Sigmoid colon (tissue), 7 donors: ENCODE measurements at regions of chr9 and their contacts with region 1.

Region 1: GRCh38 chr9:136118320-136119060 is at the start of gene TMEM250:
- DNase-seq: peak; percentile 98
- H3K4me3 ChIP-seq: peak within 1 kb of the TSS; percentile 54 to 98 (median 88)
- H3K27ac ChIP-seq: peak within 1 kb of the TSS; percentile 93 to 99 (median 98)
- H3K4me1 ChIP-seq: peaks cover 0 to 49% (median 36%) of the 10 kb centered on the region in 4 donors
- H3K27me3 ChIP-seq: no peaks in the 10 kb centered on the region
- CTCF ChIP-seq: peak in 1 of 4 experiments; percentile 12
- EP300 ChIP-seq: peak in 1 of 4 donors; percentile 56
- POLR2A ChIP-seq: no peak
- total RNA-seq, gene TMEM250: 23.7 to 35.6 (median 30.2) TPM

Region 2: DNA sequence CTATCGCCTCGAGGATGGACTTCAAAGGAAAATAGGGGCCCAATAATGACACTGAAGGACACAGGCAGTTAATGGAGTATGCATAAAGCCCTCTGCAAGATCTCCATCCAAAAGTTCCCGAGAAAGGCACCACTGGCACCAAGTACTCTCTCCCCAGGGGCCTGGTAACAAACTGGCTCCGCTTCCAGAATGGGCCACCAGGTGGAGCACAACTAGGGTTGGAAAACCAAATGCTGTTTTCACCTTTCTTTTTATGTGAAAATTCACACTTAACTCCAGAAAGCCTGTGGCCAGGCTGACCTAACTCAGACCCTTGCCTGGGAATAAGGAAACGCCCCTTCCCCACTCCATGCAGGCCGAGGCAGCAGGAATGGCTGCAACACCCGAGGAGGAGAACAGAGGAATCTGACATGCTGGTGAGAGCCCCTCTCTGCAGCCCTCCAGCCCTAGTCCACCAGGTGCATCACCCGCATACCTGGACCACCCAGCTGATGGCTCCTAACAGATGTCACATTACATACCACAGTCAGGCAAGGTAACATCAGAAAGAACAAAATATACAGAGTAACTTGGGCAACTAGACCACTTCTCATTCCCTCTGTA is 253.9 kb before region 1 on chr9:
- intact Hi-C with region 1: loop called (anchors 2 kb)
- DNase-seq: no peak
- H3K4me3 ChIP-seq: no peak overlapping the region
- H3K27ac ChIP-seq: no peak overlapping the region
- H3K4me1 ChIP-seq: peaks cover 0 to 7% (median 5%) of the 10 kb centered on the region in 4 donors
- H3K27me3 ChIP-seq: no peaks in the 10 kb centered on the region
- CTCF ChIP-seq: peak in 3 of 4 experiments; percentile 60 to 87 (median 73)
- EP300 ChIP-seq: no peak
- POLR2A ChIP-seq: no peak

Region 3: DNA sequence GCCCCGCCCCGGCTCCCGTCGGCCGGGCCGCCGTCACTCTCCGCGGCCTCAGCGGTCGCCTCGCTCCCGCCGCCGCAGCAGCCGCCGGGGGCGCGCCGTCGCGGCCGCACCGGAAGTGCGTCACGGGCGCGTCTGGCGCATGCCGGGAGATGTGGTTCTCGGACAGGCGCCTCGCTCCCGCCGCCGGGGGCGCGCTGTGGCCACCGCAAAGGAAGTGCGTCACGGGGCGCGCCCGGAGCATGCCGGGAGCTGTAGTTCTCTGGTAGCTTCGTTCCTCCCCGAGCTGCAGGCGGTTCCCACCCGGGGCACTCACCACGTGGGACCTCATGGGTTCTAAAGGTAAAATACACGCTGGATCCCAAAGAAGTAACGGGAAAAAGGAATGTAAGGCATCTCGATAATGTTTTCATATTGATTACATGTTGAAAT is 157.2 kb before region 1 on chr9 and contains the start of gene UBAC1:
- intact Hi-C with region 1: loop called (anchors 2 kb)
- DNase-seq: peak; percentile 98
- H3K4me3 ChIP-seq: peak within 1 kb of the TSS; percentile 86 to 99 (median 98)
- H3K27ac ChIP-seq: peak within 1 kb of the TSS; percentile 93 to 95 (median 94)
- H3K4me1 ChIP-seq: peaks cover 0 to 29% (median 21%) of the 10 kb centered on the region in 4 donors
- H3K27me3 ChIP-seq: no peaks in the 10 kb centered on the region
- CTCF ChIP-seq: peak in 2 of 4 experiments; percentile 16 to 22
- EP300 ChIP-seq: peak in 1 of 4 donors; percentile 61
- POLR2A ChIP-seq: no peak
- total RNA-seq, gene UBAC1: 57.4 to 80.9 (median 67.3) TPM

Region 4: GRCh38 chr9:135992486-135993408 is 125.7 kb before region 1 on chr9:
- intact Hi-C with region 1: loop called (anchors 10 kb)
- DNase-seq: peak; percentile 94
- H3K4me3 ChIP-seq: peak overlapping the region; percentile 1 to 33 (median 22)
- H3K27ac ChIP-seq: peak overlapping the region; percentile 80 to 88 (median 86)
- H3K4me1 ChIP-seq: peaks cover 3 to 45% (median 36%) of the 10 kb centered on the region in 4 donors
- H3K27me3 ChIP-seq: peaks cover 4 to 26% (median 14%) of the 10 kb centered on the region in 3 donors
- CTCF ChIP-seq: no peak
- EP300 ChIP-seq: no peak
- POLR2A ChIP-seq: no peak

Region 5: DNA sequence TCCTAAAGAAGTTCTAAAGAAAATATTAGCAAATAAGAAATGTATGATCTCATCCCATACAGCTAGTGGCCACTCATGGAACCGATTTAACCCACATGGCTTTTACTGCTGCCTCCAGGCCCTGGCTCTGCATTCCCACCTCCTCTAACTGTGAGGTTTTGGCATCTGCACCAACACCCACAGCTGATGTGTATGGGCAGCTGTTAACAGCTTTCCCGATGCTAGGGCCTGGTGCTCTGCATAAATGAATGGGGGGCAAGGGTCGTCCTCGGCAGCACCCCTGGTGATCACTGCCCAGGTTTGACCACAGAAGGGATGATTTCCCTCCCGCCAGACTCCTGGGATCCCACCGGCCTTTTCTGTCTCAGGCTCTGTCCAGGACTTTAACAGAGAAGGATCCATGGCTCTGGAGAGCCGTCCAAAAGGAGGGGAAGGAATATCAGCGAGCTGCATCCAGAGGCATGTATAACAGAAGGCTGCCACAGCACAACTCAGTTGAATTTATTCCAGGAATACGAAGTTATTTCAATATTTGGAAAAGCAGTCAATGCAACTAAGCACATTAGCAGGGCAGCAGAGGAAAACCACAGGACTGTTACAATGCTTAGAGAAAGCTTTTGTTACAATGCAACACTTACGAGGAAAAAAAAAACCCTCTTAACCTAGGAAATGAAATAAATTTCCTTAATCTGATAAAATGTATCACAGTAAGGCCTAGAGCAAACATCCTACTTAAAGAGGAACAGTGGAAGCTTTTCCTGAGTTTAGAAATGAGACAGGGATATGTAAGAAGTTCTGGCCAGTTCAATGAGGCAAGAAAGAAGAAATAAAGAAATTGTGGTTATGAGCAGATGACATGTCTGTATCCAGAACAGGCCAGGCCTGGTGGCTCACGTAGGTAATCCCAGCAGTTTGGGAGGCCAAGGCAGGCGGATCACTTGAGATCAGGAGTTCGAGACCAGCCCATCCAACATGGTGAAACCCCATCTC is 86.5 kb before region 1 on chr9:
- intact Hi-C with region 1: no loop called
- DNase-seq: no peak
- H3K4me3 ChIP-seq: no peak overlapping the region
- H3K27ac ChIP-seq: peak overlapping the region in 1 of 4 donors; percentile 2
- H3K4me1 ChIP-seq: peaks cover 0 to 33% (median 26%) of the 10 kb centered on the region in 4 donors
- H3K27me3 ChIP-seq: no peaks in the 10 kb centered on the region
- CTCF ChIP-seq: no peak
- EP300 ChIP-seq: no peak
- POLR2A ChIP-seq: no peak

Region 6: GRCh38 chr9:136059321-136060233 is 58.9 kb before region 1 on chr9:
- intact Hi-C with region 1: no loop called
- DNase-seq: peak; percentile 61
- H3K4me3 ChIP-seq: no peak overlapping the region
- H3K27ac ChIP-seq: no peak overlapping the region
- H3K4me1 ChIP-seq: peaks cover 0 to 97% (median 88%) of the 10 kb centered on the region in 4 donors
- H3K27me3 ChIP-seq: no peaks in the 10 kb centered on the region
- CTCF ChIP-seq: no peak
- EP300 ChIP-seq: no peak
- POLR2A ChIP-seq: no peak

Region 7: DNA sequence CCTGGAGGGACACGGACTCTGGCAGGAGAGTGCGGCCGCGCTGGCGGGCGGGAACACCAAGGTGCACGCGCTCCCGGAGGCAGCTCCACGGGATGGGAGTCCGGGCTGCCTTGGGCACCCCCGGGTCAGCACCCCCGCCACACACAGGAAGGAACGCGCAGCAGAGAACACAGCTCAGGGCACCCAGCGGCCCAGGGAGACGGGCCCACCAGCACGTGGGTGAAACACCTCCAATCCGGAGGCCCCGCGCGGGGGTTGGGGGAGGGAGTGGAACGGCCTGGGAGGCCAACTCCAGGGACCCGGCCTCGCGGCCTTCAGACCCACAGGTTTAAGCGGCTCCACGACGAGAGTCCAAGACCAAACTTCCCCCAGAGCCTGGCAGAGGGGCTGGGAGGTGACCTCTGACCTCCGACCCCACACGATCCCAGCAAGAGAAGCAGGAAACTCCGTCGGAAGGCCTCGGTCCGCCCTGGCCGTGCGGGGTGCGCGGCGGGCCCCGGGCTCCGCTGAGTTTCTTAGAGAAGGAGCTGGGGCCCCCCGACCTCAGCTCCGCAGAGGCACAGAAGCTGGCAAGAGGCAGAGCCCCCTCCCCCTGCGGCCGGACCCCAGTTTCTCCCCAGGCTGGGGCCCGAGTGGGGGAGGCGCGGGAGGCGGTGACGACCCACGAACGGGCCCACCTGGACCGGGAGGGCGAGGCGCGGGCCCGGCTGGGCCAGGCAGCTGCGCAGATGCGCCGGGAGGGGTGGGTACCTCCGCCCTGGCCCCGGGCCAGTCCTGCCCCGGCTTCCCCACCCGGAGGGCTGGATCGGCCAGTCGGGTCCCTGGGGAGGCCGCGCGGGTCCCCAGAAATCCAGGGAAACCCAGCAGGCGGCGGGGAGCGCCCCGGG is 24.3 kb before region 1 on chr9:
- intact Hi-C with region 1: loop called (anchors 2 kb)
- DNase-seq: peak; percentile 96
- H3K4me3 ChIP-seq: peak overlapping the region; percentile 75 to 95 (median 90)
- H3K27ac ChIP-seq: peak overlapping the region; percentile 97 to 98 (median 98)
- H3K4me1 ChIP-seq: peaks cover 0 to 68% (median 65%) of the 10 kb centered on the region in 4 donors
- H3K27me3 ChIP-seq: no peaks in the 10 kb centered on the region
- CTCF ChIP-seq: peak in 2 of 4 experiments; percentile 10 to 34
- EP300 ChIP-seq: no peak
- POLR2A ChIP-seq: peak; percentile 11 to 79